Psoas muscle (tissue), 8 donors: ENCODE measurements at regions of chr18 and their contacts with region 1.

Region 1: GRCh38 chr18:50726960-50727589 is 92.7 kb downstream of the MRO start:
- DNase-seq: no peak
- ATAC-seq: peak; percentile 54 to 80 (median 62)
- H3K4me3 ChIP-seq: no peak overlapping the region
- H3K27ac ChIP-seq: peak overlapping the region; percentile 66
- H3K4me1 ChIP-seq: peaks cover 5% of the 10 kb centered on the region
- H3K27me3 ChIP-seq: no peaks in the 10 kb centered on the region
- CTCF ChIP-seq: no peak

Region 2: GRCh38 chr18:50662177-50662576 is 64.9 kb before region 1 on chr18:
- intact Hi-C with region 1: loop called in 1 of 2 experiments (anchors 10 kb)
- DNase-seq: no peak
- ATAC-seq: no peak
- H3K4me3 ChIP-seq: no peak overlapping the region
- H3K27ac ChIP-seq: no peak overlapping the region
- H3K4me1 ChIP-seq: peaks cover 29% of the 10 kb centered on the region
- H3K27me3 ChIP-seq: no peaks in the 10 kb centered on the region
- CTCF ChIP-seq: peak; percentile 31

Region 3: GRCh38 chr18:50775222-50775621 is 48.1 kb after region 1 on chr18:
- intact Hi-C with region 1: no loop called
- DNase-seq: no peak
- ATAC-seq: no peak
- H3K4me3 ChIP-seq: no peak overlapping the region
- H3K27ac ChIP-seq: no peak overlapping the region
- H3K4me1 ChIP-seq: no peaks in the 10 kb centered on the region
- H3K27me3 ChIP-seq: no peaks in the 10 kb centered on the region
- CTCF ChIP-seq: no peak